ENCODE measurements at regions of chr11 and their contacts with region 1.

Region 1: GRCh38 chr11:18105802-18106574 is at the start of gene SAAL1:
- H3K4me3 ChIP-seq: peak within 1 kb of the TSS; percentile 100
- H3K27ac ChIP-seq: peak within 1 kb of the TSS; percentile 39; the same call in 1 of the 2 replicates
- H3K4me1 ChIP-seq: no peaks in the 10 kb centered on the region
- CTCF ChIP-seq: peak; percentile 88

Region 2: GRCh38 chr11:18088966-18089365 is 17.0 kb before region 1 on chr11:
- CTCF ChIA-PET with region 1: interaction called, 13 read pairs
- POLR2A ChIA-PET with region 1: interaction called, 4 read pairs
- H3K4me3 ChIP-seq: no peak overlapping the region
- H3K27ac ChIP-seq: no peak overlapping the region
- H3K4me1 ChIP-seq: no peaks in the 10 kb centered on the region
- CTCF ChIP-seq: no peak